ENCODE measurements at regions of chr19 and their contacts with region 1.

Region 1: DNA sequence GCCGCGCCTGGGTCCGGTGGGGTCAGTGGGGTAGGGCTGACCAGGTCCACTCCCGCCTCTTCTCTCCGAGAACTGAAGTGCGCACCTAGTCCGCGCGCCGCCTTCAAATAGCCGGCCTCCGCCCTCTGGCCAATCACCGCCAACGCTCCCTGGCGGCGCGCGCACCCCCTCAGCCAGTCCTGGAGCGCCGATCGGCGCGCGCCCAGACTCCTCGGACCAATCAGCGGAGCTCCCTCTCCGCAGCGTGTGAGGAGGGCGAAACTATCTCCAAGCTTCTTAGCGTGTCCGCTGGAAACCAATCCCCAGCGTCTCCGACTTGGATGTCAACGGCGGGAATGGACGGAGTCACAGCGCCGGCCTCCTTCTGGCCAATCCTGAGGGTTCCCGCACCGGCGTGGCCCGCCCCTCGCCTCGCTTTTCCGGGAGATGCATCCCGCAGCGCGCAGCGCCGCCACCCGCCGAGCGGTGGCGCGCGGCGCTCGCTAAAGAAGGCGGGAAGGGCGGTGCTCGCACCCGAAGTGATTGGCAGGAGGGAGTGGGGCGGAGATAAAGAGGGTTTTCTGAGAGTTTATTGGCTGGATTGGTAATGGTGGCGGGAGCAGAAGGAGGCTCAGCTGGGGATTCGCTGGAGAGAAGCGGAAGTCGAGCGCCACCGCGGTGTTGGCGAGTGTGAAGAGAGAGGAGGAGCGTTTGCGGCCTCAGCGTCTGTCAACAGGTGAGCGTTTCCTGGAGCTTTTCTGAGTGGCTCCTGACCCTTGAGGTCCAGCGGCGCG is at the start of gene ASF1B:
- DNase-seq: peak; percentile 94
- ATAC-seq: peak; percentile 80
- H3K4me3 Mint-ChIP-seq: peak within 1 kb of the TSS; percentile 94
- H3K27ac Mint-ChIP-seq: peak within 1 kb of the TSS; percentile 94
- H3K4me1 Mint-ChIP-seq: peaks cover 16% of the 10 kb centered on the region
- H3K27me3 Mint-ChIP-seq: no peaks in the 10 kb centered on the region
- CTCF ChIP-seq: no peak
- total RNA-seq, gene ASF1B: 3.4 and 3.7 TPM in 2 replicates

Region 2: DNA sequence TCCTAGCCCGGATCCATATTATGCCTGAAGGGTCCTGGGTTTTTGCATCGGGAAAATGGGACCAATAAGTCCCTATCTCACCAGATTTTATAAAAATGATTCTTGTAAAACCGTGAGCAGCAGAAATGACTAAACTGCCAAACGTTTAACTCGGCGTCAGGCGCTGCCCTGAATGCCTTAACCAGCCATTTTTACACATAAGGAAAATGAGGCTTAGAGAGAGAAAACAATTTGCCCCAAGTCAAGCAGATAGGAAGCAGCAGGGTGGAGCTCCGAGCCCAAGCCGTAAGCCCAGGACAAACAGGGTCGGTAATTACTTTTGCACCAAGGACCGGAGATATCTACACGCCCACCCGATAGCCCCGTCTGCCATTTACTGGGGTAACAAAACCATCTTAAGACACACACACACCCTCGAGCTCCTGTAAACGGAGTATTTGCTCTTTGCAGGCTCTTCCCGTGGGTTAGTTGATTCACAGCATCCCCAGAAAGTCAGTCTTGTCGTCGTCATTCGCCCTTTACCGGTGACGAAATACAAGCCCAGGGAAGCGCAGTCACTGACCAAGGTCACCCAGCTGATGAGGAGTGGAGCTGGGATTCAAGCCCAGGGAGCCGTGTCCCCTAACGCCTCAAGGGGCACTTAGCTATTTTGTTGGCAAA is 388.4 kb before region 1 on chr19:
- CTCF ChIA-PET with region 1: no interaction called
- POLR2A ChIA-PET with region 1: interaction called, 12 read pairs
- intact Hi-C with region 1: no loop called
- DNase-seq: no peak
- ATAC-seq: no peak
- H3K4me3 Mint-ChIP-seq: peak overlapping the region; percentile 87
- H3K27ac Mint-ChIP-seq: peak overlapping the region; percentile 85
- H3K4me1 Mint-ChIP-seq: peaks cover 27% of the 10 kb centered on the region
- H3K27me3 Mint-ChIP-seq: no peaks in the 10 kb centered on the region
- CTCF ChIP-seq: no peak

Region 3: DNA sequence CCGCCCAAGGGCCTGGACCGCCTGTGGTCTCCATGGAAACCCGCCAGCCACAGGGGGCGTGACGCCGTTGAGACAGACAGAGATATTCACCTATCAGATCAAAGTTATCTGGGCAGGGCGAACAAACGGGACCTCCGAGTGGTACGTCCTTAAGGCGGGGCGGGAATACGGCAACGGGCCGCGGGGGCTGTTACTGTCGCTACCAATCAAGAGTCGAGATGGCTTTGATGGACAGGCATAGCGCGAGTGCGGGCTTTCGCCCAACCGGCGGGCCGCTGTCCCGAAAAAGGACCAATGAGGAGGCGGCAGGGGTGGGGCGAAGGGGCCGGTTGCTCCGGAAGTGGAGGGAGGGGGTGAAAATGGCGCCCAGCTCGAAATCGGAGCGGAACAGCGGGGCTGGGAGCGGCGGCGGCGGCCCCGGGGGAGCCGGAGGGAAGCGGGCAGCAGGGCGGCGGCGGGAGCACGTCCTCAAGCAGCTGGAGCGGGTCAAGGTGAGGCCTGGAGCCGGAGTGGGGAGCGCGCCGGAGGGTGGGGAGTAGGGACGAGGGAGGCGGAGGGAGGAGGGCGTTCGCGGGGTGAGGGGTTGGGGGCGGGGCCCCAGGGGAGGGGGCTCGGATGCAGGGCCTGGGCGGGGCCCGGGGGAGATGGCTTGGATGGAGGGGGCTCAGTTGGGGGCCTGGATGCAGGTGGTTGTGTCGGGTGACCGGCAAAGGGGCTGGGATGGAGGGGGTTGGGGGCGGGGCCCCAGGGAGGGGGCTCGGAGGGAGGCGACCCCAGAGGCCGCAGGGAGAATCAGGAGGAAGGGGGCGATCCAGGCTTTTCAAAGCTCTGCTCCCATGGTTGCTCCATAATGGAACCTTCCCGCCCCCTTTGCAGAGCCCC is 184.3 kb before region 1 on chr19 and contains the start of gene DCAF15:
- CTCF ChIA-PET with region 1: interaction called, 3 read pairs
- POLR2A ChIA-PET with region 1: interaction called, 3 read pairs
- intact Hi-C with region 1: loop called (anchors 1 kb)
- DNase-seq: peak; percentile 89
- ATAC-seq: peak; percentile 96
- H3K4me3 Mint-ChIP-seq: peak within 1 kb of the TSS; percentile 94
- H3K27ac Mint-ChIP-seq: peak within 1 kb of the TSS; percentile 90
- H3K4me1 Mint-ChIP-seq: peaks cover 18% of the 10 kb centered on the region
- H3K27me3 Mint-ChIP-seq: no peaks in the 10 kb centered on the region
- CTCF ChIP-seq: no peak
- total RNA-seq, gene DCAF15: 71.4 and 83.4 TPM in 2 replicates

Region 4: DNA sequence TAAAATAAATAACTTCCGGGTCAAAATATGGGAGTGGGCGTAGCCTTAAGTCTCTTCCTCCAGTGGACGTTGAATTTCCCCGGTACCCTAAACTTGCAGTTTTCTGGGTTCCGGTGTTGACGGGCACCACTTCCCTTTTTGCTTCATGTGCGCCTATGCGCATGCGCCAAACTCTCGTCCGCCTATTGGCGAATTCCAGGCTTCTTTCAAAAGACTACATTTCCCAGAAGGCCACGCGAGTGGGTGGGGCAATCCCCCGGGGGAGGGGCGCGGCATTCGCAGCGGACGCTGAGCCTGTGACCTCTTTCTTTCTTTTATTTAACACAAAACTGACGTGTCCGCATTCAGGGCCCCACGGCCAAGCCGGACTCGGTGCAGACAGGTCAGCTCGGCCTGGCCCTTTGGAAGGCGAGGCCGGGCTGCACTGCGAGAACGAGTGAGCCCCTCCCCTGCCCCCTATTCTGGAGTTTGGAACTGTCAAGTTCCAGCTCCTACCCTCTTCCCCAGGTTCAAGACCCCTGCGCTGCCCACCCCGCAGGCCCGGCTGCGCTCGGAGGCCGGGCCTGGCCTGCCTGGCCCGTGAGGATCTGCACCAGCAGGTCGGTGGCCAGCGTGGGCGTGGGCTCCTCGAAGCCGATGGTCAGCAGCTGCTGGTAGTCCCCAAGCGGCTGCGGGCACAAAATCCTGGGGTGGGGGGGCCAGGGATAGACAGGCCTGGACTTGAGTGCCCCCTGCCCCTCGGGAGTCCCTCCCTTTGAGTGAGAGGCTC is 55.2 kb before region 1 on chr19:
- CTCF ChIA-PET with region 1: interaction called, 4 read pairs
- POLR2A ChIA-PET with region 1: interaction called, 12 read pairs
- intact Hi-C with region 1: loop called (anchors 1 kb)
- DNase-seq: peak; percentile 98
- ATAC-seq: peak; percentile 91
- H3K4me3 Mint-ChIP-seq: peak overlapping the region; percentile 94
- H3K27ac Mint-ChIP-seq: peak overlapping the region; percentile 95
- H3K4me1 Mint-ChIP-seq: peaks cover 17% of the 10 kb centered on the region
- H3K27me3 Mint-ChIP-seq: no peaks in the 10 kb centered on the region
- CTCF ChIP-seq: no peak

Region 5: GRCh38 chr19:14187561-14187960 is 50.9 kb after region 1 on chr19:
- CTCF ChIA-PET with region 1: no interaction called
- POLR2A ChIA-PET with region 1: interaction called, 17 read pairs
- intact Hi-C with region 1: no loop called
- DNase-seq: no peak
- ATAC-seq: no peak
- H3K4me3 Mint-ChIP-seq: no peak overlapping the region
- H3K27ac Mint-ChIP-seq: no peak overlapping the region
- H3K4me1 Mint-ChIP-seq: no peaks in the 10 kb centered on the region
- H3K27me3 Mint-ChIP-seq: peaks cover 11% of the 10 kb centered on the region
- CTCF ChIP-seq: no peak

Region 6: GRCh38 chr19:14405758-14406644 is 269.3 kb after region 1 on chr19:
- CTCF ChIA-PET with region 1: interaction called, 13 read pairs
- POLR2A ChIA-PET with region 1: interaction called, 13 read pairs
- intact Hi-C with region 1: loop called (anchors 1 kb)
- DNase-seq: peak; percentile 93
- ATAC-seq: peak; percentile 88
- H3K4me3 Mint-ChIP-seq: no peak overlapping the region
- H3K27ac Mint-ChIP-seq: peak overlapping the region; percentile 56
- H3K4me1 Mint-ChIP-seq: peaks cover 37% of the 10 kb centered on the region
- H3K27me3 Mint-ChIP-seq: no peaks in the 10 kb centered on the region
- CTCF ChIP-seq: no peak

Region 7: GRCh38 chr19:14450168-14450874 is 313.6 kb after region 1 on chr19:
- CTCF ChIA-PET with region 1: no interaction called
- POLR2A ChIA-PET with region 1: no interaction called
- intact Hi-C with region 1: no loop called
- DNase-seq: no peak
- ATAC-seq: peak; percentile 89
- H3K4me3 Mint-ChIP-seq: no peak overlapping the region
- H3K27ac Mint-ChIP-seq: no peak overlapping the region
- H3K4me1 Mint-ChIP-seq: no peaks in the 10 kb centered on the region
- H3K27me3 Mint-ChIP-seq: no peaks in the 10 kb centered on the region
- CTCF ChIP-seq: no peak

Region 8: DNA sequence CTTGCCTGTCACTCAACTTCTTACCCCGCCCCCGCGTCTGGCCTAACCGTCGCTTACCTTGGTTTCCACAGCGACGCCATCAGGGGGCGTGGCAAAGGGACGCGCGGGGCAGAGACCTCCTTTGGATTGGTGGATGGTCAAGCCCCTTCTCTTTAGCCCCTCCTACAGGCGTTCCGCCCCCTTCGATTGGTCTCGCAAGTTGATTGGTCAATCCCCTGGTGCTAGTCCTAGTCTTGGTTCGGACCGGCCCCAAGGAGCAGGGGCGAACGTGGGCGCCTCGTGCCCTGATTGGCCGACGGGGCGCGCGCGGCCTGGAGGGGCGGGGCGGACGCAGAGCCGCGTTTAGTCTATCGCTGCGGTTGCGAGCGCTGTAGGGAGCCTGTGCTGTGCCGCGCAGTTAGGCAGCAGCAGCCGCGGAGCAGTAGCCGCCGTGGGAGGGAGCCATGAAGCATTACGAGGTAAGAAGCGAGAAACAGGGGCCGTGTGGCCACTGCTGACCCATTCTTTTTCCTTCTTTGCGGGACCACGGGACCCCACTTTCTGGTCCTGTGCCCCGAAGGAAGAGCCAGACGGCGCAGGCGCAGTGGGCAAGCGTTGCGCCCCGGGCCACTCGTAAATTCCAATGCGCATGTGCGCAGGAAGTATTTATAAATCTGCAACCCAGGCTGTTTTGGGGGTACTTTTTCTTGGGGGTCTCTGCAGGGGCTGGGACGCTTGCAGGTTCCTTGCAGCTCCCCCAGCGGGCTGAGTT is 392.7 kb after region 1 on chr19 and contains the start of gene TECR:
- CTCF ChIA-PET with region 1: no interaction called
- POLR2A ChIA-PET with region 1: no interaction called
- intact Hi-C with region 1: loop called (anchors 1 kb)
- DNase-seq: peak; percentile 99
- ATAC-seq: peak; percentile 96
- H3K4me3 Mint-ChIP-seq: peak within 1 kb of the TSS; percentile 95
- H3K27ac Mint-ChIP-seq: peak within 1 kb of the TSS; percentile 96
- H3K4me1 Mint-ChIP-seq: peaks cover 31% of the 10 kb centered on the region
- H3K27me3 Mint-ChIP-seq: no peaks in the 10 kb centered on the region
- CTCF ChIP-seq: no peak
- total RNA-seq, gene TECR: 55.3 and 58.6 TPM in 2 replicates

Measured in activated B cell treated with CpG ODN at 0.5 μM for 24 hours (primary cell).